ENCODE measurements at regions of chr9 and their contacts with region 1.

Region 1: GRCh38 chr9:96571681-96572080 is 48.0 kb downstream of the CDC14B start:
- DNase-seq: no peak
- ATAC-seq: no peak
- H3K4me3 ChIP-seq: no peak overlapping the region
- H3K4me3 Mint-ChIP-seq: no peak overlapping the region
- H3K27ac ChIP-seq: no peak overlapping the region
- H3K27ac Mint-ChIP-seq: no peak overlapping the region
- H3K4me1 ChIP-seq: peaks cover 0 to 7% of the 10 kb centered on the region in 2 experiments
- H3K4me1 Mint-ChIP-seq: peaks cover 3 to 6% (median 4%) of the 10 kb centered on the region in 3 donors
- H3K27me3 ChIP-seq: peaks cover 0 to 11% of the 10 kb centered on the region in 2 experiments
- H3K27me3 Mint-ChIP-seq: peaks cover 5 to 14% of the 10 kb centered on the region in 2 donors

Region 2: DNA sequence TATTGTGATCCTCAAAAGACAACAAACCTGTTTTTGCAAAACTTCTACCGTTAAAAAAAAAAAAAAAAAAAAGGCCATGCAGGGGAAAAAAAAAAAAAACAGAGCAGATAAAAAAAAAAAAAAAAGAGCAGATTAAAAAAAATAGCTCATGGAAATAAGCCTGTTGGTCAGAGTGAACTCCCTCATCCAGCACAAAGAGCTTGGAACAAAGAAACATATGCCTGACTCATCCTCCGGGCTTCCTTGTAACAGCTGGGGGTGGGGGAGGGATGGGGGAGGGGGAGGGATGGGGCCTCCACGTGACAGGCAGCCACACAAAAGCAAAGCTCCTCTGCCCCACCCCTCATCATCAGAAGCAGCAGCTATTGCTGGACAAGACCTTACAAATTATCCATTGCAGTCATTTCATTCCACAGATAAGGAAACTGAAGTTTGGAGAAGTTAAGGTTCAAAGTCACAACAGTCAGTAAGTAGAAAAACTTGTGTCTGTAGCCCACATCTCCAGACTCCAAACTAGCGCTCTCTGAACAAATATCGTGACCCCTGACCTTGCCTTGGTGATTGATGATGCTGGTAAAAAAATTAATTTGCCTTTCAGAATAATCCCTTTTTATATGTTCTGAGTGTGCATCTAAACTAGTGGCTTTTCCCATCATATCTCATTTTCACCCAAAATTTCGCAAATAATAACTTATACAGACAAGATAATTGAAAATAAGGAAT is 227.1 kb before region 1 on chr9:
- CTCF ChIA-PET with region 1: no interaction called
- POLR2A ChIA-PET with region 1: interaction called in 1 of 2 experiments, 16 read pairs
- DNase-seq: no peak
- ATAC-seq: no peak
- H3K4me3 ChIP-seq: no peak overlapping the region
- H3K4me3 Mint-ChIP-seq: no peak overlapping the region
- H3K27ac ChIP-seq: no peak overlapping the region
- H3K27ac Mint-ChIP-seq: no peak overlapping the region
- H3K4me1 ChIP-seq: no peaks in the 10 kb centered on the region
- H3K4me1 Mint-ChIP-seq: no peaks in the 10 kb centered on the region
- H3K27me3 ChIP-seq: no peaks in the 10 kb centered on the region
- H3K27me3 Mint-ChIP-seq: no peaks in the 10 kb centered on the region

Region 3: DNA sequence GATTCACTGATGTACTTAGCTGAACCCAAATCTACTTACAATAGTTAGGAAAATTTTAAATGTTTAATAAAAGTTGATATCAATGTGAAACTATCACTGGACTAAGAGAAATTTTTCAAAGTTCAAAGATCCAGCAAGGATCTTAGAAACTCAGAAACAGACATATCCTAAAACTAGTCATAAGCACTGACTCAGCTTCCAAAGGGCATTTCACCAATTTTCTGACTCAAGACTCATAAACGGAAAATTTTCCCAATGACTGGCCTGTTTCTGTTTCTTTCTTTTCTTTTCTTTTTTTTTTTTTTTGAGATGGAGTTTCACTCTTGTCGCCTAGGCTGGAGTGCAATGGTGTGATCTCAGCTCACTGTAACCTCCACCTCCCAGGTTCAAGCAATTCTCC is 18.6 kb before region 1 on chr9:
- CTCF ChIA-PET with region 1: no interaction called
- POLR2A ChIA-PET with region 1: no interaction called
- DNase-seq: no peak
- ATAC-seq: no peak
- H3K4me3 ChIP-seq: no peak overlapping the region
- H3K4me3 Mint-ChIP-seq: no peak overlapping the region
- H3K27ac ChIP-seq: no peak overlapping the region
- H3K27ac Mint-ChIP-seq: no peak overlapping the region
- H3K4me1 ChIP-seq: no peaks in the 10 kb centered on the region
- H3K4me1 Mint-ChIP-seq: peaks cover 0 to 24% (median 4%) of the 10 kb centered on the region in 3 donors
- H3K27me3 ChIP-seq: no peaks in the 10 kb centered on the region
- H3K27me3 Mint-ChIP-seq: no peaks in the 10 kb centered on the region